ENCODE measurements at regions of chr1 and their contacts with region 1.

Region 1: GRCh38 chr1:37479255-37480124 is 5.1 kb downstream of the ZC3H12A start:
- DNase-seq: peak; percentile 62 to 95 (median 91)
- ATAC-seq: peak; percentile 55
- H3K4me3 ChIP-seq: peak overlapping the region; percentile 93 to 95
- H3K4me3 Mint-ChIP-seq: peak overlapping the region; percentile 95
- H3K27ac ChIP-seq: peak overlapping the region; percentile 95 to 99
- H3K27ac Mint-ChIP-seq: peak overlapping the region; percentile 99
- H3K4me1 ChIP-seq: peaks cover 39% of the 10 kb centered on the region
- H3K4me1 Mint-ChIP-seq: peaks cover 42% of the 10 kb centered on the region
- H3K27me3 ChIP-seq: no peaks in the 10 kb centered on the region
- H3K27me3 Mint-ChIP-seq: no peaks in the 10 kb centered on the region
- CTCF ChIP-seq: no peak

Region 2: DNA sequence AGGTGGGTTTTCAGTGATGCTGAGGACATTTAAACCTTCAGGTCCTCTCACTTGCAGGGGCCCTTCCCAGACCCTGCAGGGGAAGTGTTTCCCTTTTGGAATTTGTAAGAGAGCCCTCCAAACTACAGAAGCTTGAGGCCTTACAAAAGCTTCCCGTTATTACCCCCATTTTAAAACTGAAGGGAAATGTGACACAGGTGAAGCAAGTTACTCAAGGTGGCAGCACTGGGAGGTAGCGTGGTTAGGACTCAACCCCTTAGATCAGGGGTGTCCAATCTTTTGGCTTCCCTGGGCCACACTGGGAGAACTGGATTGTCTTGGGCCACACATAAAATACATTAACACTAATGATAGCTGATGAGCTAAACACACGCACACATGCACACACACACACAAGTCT is 21.0 kb before region 1 on chr1:
- CTCF ChIA-PET with region 1: interaction called, 559 read pairs
- POLR2A ChIA-PET with region 1: interaction called, 9 read pairs
- intact Hi-C with region 1: no loop called
- DNase-seq: peak in 2 of 9 experiments; percentile 31 to 45
- ATAC-seq: no peak
- H3K4me3 ChIP-seq: no peak overlapping the region
- H3K4me3 Mint-ChIP-seq: no peak overlapping the region
- H3K27ac ChIP-seq: no peak overlapping the region
- H3K27ac Mint-ChIP-seq: no peak overlapping the region
- H3K4me1 ChIP-seq: no peaks in the 10 kb centered on the region
- H3K4me1 Mint-ChIP-seq: peaks cover 9% of the 10 kb centered on the region
- H3K27me3 ChIP-seq: no peaks in the 10 kb centered on the region
- H3K27me3 Mint-ChIP-seq: no peaks in the 10 kb centered on the region
- CTCF ChIP-seq: no peak

Measured in CD8-positive, alpha-beta T cell (primary cell).